Mucosa of descending colon (tissue), 3 donors: ENCODE measurements at regions of chr1 and their contacts with region 1.

Region 1: GRCh38 chr1:93021539-93022134 is 57.4 kb upstream of the MTF2 start:
- DNase-seq: peak in 1 of 3 donors; percentile 39
- ATAC-seq: peak; percentile 80
- H3K4me3 ChIP-seq: no peak overlapping the region
- H3K4me1 ChIP-seq: no peaks in the 10 kb centered on the region
- CTCF ChIP-seq: peak; percentile 55

Region 2: DNA sequence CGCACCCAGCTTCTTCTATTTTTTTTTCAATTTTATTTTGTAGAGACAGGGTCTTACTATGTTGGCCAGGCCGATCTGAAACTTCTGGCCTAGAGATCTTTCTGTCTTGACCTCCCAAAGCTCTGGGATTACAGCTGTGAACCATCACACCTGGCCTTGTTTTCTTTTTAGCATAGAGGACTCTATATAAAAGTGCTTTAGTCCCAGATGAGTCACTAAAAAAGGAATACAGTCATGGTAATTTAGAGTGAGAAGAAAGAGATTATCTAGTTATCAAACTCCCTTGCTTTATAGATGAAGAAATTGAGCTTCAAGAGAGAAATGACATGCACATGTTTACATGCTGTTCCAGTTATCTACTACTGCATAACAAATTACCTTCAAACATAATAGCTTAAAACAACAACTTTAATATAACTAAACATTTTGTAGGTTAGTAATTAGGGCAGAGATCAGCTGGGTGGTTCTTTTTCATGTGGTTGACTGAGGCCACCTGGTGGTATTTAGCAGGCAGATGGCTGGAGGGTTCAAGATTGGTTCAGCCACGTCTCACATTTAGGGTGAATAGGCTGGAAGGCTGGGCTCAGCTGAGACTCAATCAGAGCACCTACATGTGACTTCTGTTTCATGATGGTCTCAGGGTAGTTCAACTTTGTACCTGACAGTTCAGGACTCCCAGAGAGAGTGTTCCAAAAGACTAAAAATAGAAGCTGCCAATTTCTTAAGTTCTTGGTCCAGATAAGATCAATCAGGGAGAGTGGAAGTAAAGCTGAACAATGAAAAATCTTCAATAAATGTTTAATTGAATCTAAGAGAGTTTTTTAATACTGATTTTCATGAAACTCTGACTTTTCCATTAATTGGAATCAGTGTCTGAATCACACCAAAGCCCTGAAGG is 40.5 kb after region 1 on chr1:
- intact Hi-C with region 1: loop called in 1 of 2 experiments (anchors 5 kb)
- DNase-seq: peak in 1 of 3 donors; percentile 72
- ATAC-seq: peak; percentile 81
- H3K4me3 ChIP-seq: no peak overlapping the region
- H3K4me1 ChIP-seq: no peaks in the 10 kb centered on the region
- CTCF ChIP-seq: peak; percentile 21

Region 3: DNA sequence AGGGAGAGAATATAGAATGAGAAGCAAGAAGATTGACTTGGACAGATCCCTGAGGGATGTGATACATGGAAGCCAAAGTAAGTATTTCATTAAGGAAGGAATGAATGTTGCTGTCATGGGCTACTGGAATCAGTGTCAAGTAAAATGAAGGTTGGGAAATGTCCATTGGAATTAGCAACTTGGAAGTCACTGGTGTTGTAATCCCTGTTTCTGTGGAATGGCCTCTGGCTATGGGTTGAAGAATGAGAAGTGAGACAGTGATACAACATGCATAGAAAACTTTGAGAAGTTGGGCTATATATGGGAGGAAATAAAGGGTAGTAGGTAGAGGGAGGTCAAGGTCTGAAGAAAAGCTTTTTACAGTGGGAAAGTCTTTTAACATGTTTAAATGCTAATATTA is 213.6 kb after region 1 on chr1:
- intact Hi-C with region 1: no loop called
- DNase-seq: no peak
- ATAC-seq: no peak
- H3K4me3 ChIP-seq: no peak overlapping the region
- H3K4me1 ChIP-seq: no peaks in the 10 kb centered on the region
- CTCF ChIP-seq: no peak